ENCODE measurements at regions of chr5 and their contacts with region 1.

Region 1: GRCh38 chr5:150217873-150218692 is 28.2 kb downstream of the SLC6A7 start:
- DNase-seq: peak; percentile 76 to 84
- ATAC-seq: peak; percentile 56

Region 2: DNA sequence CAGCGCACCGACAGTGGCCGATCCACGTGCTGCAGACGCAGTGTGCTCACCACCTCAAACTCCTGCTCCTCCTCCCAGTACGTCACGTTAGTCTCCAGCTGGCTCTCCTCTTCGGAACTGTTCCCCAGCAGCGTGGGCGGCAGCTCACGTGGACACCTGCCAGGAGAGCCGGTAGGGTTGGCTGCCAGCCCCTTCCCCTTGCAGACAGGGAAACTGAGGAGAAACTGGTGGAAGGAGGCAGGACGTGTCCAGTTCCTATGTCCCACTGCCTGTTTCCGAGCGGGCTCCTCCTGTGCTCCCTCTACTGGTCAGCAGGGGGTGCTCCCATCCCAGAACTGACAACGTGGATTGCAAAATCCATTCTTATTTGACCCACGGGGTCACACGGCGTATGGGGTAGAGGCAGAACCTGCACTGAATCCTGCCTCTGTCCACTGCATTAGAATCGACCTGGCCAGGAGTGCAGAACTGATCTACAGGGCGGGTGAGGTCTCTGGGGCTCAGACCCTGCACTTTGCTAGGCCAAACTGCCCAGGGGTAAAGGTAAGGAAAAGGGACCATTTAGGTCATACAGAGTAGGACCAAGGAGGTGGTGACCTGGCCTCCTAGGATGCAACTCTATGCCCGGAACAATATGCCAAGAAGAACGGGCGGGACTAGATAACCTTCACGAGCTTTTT is 88.1 kb before region 1 on chr5:
- intact Hi-C with region 1: loop called (anchors 2 to 5 kb)
- DNase-seq: peak; percentile 57 to 78
- ATAC-seq: peak; percentile 80

Region 3: DNA sequence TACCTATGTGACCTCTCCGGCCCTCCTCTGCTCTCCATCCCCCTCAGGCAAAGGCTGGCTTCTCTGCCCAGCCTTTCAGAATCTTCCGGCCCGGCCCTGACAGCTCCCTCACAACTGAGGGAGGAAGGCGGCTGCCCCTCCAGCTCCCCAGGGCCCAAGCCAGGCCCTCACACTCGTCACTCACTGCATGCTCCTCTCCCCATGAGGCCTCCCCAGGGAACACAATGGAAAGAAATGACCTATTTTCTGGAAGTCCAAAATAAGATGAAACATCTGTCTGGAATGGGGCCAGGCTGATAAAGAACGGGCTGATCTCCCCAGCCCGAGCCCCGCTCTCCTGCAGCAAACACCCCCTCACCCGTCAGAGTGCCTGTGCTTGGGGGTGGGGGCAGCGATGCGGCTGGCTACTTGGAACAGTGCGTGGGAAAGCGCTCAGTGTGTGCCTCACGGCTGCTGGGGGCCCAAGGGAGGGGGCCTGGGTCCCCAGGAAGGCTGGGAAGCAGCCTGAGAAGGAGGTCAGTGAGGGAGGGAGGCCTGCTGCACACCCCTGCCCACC is 73.8 kb before region 1 on chr5:
- intact Hi-C with region 1: no loop called
- DNase-seq: no peak
- ATAC-seq: no peak

Region 4: GRCh38 chr5:150161242-150162141 is 56.6 kb before region 1 on chr5:
- intact Hi-C with region 1: loop called in 1 of 2 experiments (anchors 2 kb)
- DNase-seq: peak; percentile 88 to 94
- ATAC-seq: peak; percentile 67

Region 5: DNA sequence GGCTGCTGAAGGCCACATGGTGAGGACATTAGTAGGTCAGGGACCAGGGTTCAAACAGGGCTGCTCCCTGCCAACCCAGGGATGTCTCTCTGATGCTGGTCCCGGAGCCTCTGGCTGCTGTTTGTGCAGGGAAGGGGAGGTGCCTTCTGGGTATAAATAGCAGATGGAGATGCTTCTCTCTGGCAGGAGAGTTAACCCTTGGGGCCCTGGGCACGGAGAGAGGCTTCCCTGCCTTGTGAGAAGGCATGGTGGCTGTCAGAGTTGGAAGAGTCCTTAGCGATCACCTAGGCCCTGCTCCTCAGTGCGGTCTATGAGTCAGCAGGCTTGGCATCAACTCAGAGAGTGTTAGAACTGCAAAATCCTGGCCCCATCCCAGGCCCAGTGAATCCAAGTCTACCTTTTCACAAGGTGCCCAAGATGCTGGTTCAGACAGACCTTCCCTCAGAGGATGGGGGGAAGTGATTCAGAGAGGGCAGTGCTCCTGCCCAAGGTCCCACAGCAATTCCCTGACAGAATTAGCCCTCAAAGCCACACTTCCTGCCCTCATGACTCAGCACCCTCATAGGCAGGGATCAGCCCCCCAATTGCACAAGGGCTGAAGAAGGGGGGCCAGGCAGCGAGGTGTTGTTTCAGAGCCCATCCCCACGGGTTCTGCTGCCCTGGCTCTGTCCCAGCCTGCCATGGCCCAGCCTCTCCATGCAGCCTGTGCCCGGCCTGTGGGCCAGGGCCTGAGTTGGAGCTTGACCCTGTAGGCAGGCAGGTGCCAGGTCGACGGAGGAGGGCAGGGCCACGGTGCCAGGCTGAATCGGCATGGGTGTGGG is 45.9 kb after region 1 on chr5:
- intact Hi-C with region 1: no loop called
- DNase-seq: peak in 1 of 2 donors; percentile 33
- ATAC-seq: no peak